Kidney (tissue), 22 donors: ENCODE measurements at regions of chr20 and their contacts with region 1.

Region 1: DNA sequence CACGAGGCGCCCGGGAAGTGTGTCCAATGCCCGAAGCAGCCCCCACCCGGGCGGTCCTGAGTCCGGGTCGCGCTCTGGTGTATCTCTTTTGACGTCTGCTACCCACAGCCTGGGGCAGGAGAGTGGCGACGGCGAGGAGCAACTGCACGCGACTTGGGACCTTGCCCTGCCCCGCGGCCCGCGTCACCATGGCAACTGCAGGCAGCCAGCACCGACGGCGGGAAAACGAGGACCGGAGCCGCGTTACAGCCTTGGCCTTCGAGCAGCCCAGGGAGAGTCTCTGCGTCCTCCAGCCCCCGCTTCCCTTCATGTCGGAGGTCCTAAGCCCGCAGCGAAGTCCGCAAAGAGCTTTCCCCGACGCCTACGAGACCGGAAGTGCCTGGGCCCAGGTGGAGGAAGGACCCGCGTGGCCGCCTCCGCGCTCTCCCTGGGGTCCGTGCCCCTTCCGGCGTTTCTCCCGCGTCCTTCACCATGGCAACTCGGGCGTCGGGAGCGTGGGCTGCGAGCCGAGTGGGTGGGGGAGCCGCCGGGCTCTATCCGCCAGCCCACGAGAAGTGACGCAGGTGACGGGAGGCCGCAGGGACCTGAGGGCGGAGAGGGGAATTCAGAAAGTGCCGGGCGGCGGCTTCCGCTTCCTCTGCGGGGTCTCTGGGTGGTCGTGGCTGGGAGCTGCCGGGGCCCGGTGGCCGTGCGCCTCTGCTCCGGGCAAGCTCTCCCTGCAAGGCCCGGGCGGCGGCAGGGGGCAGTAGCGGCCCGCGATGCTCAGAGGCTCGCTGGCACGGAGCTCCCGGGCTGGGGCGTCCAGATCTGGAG is 88.6 kb upstream of the TGM3 start:
- DNase-seq: peak; percentile 90 to 93 (median 92)
- H3K4me3 ChIP-seq: peak overlapping the region in 2 of 3 donors; percentile 44 to 46
- H3K27ac ChIP-seq: no peak overlapping the region
- H3K4me1 ChIP-seq: peaks cover 0 to 2% (median 0%) of the 10 kb centered on the region in 3 donors
- H3K27me3 ChIP-seq: no peaks in the 10 kb centered on the region
- CTCF ChIP-seq: peak; percentile 60

Region 2: DNA sequence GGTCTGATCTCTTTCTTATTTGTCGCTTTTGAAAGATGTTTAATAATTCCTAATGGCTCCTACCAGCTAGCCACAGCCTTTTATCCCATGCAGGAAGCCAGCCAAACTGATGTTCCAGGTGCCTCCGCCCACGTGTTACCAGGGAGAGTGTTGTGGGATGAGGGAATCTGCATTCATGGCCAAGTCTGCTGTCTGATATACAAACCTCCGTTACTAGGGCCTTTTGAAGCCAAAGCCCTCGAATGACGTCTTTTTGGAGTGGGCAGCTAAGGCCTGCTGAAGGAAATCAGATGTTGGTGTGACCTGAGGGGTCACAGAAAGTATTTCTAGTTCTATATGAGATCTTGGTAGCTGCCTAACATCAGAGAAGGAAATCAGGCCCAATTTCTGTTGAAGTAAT is 84.2 kb before region 1 on chr20:
- intact Hi-C with region 1: no loop called
- DNase-seq: peak in 3 of 5 donors; percentile 26 to 87 (median 45)
- H3K4me3 ChIP-seq: no peak overlapping the region
- H3K27ac ChIP-seq: no peak overlapping the region
- H3K4me1 ChIP-seq: peaks cover 0 to 9% (median 2%) of the 10 kb centered on the region in 3 donors
- H3K27me3 ChIP-seq: no peaks in the 10 kb centered on the region
- CTCF ChIP-seq: no peak

Region 3: GRCh38 chr20:2451939-2452732 is 245.0 kb after region 1 on chr20:
- intact Hi-C with region 1: loop called (anchors 5 kb)
- DNase-seq: peak in 4 of 5 donors; percentile 78 to 87 (median 82)
- H3K4me3 ChIP-seq: no peak overlapping the region
- H3K27ac ChIP-seq: no peak overlapping the region
- H3K4me1 ChIP-seq: no peaks in the 10 kb centered on the region
- H3K27me3 ChIP-seq: no peaks in the 10 kb centered on the region
- CTCF ChIP-seq: peak; percentile 80